PC-9 (cell line): ENCODE measurements at regions of chr10 and their contacts with region 1.

Region 1: GRCh38 chr10:72483471-72483870 is 128.8 kb upstream of the DNAJB12 start:
- DNase-seq: no peak
- H3K4me3 ChIP-seq: no peak overlapping the region
- H3K27ac ChIP-seq: no peak overlapping the region
- H3K4me1 ChIP-seq: no peaks in the 10 kb centered on the region
- H3K27me3 ChIP-seq: no peaks in the 10 kb centered on the region
- CTCF ChIP-seq: no peak

Region 2: DNA sequence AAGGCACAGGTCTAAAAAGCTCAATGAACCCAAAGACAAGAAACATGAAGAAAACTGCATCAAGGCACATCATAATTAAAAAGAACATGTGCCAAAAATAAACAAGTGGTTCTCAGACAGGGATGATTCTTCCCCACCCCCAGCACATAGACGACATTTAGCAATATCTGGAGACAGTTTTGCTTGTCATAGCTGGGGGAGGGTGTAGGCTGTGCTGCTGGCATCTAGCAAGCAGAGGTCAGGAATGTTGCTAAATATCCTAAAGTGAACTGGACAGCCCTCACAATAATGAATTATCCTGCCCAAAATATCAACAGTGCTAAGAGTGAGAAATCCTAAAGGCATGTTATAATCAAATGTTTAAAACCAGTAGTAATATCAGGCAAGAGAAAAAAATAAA is 19.8 kb after region 1 on chr10:
- CTCF ChIA-PET with region 1: interaction called, 6 read pairs
- POLR2A ChIA-PET with region 1: interaction called, 15 read pairs
- intact Hi-C with region 1: no loop called
- DNase-seq: no peak
- H3K4me3 ChIP-seq: no peak overlapping the region
- H3K27ac ChIP-seq: no peak overlapping the region
- H3K4me1 ChIP-seq: peaks cover 7% of the 10 kb centered on the region; the same call in 1 of the 2 replicates
- H3K27me3 ChIP-seq: no peaks in the 10 kb centered on the region
- CTCF ChIP-seq: no peak

Region 3: GRCh38 chr10:72525277-72525676 is 41.8 kb after region 1 on chr10:
- CTCF ChIA-PET with region 1: no interaction called
- POLR2A ChIA-PET with region 1: interaction called, 28 read pairs
- intact Hi-C with region 1: no loop called
- DNase-seq: no peak
- H3K4me3 ChIP-seq: no peak overlapping the region
- H3K27ac ChIP-seq: no peak overlapping the region
- H3K4me1 ChIP-seq: no peaks in the 10 kb centered on the region
- H3K27me3 ChIP-seq: no peaks in the 10 kb centered on the region
- CTCF ChIP-seq: no peak

Region 4: GRCh38 chr10:72587568-72587967 is 104.1 kb after region 1 on chr10:
- CTCF ChIA-PET with region 1: no interaction called
- POLR2A ChIA-PET with region 1: interaction called, 11 read pairs
- intact Hi-C with region 1: no loop called
- DNase-seq: no peak
- H3K4me3 ChIP-seq: no peak overlapping the region
- H3K27ac ChIP-seq: no peak overlapping the region
- H3K4me1 ChIP-seq: no peaks in the 10 kb centered on the region
- H3K27me3 ChIP-seq: no peaks in the 10 kb centered on the region
- CTCF ChIP-seq: no peak

Region 5: GRCh38 chr10:73032536-73032935 is 549.1 kb after region 1 on chr10:
- CTCF ChIA-PET with region 1: no interaction called
- POLR2A ChIA-PET with region 1: interaction called, 13 read pairs
- intact Hi-C with region 1: no loop called
- DNase-seq: no peak
- H3K4me3 ChIP-seq: no peak overlapping the region
- H3K27ac ChIP-seq: no peak overlapping the region
- H3K4me1 ChIP-seq: no peaks in the 10 kb centered on the region
- H3K27me3 ChIP-seq: no peaks in the 10 kb centered on the region
- CTCF ChIP-seq: no peak